Gastrocnemius medialis (tissue), 4 donors: ENCODE measurements at regions of chr2 and their contacts with region 1.

Region 1: GRCh38 chr2:161044095-161044865 is 115.9 kb upstream of the TANK start:
- DNase-seq: peak in 1 of 2 donors; percentile 53
- ATAC-seq: peak; percentile 66 to 73
- H3K4me3 ChIP-seq: no peak overlapping the region
- H3K27ac ChIP-seq: peak overlapping the region; percentile 15 to 66 (median 37)
- H3K4me1 ChIP-seq: peaks cover 14 to 23% of the 10 kb centered on the region in 2 donors
- H3K27me3 ChIP-seq: no peaks in the 10 kb centered on the region
- CTCF ChIP-seq: no peak
- POLR2A ChIP-seq: no peak

Region 2: GRCh38 chr2:161030260-161031063 is 13.8 kb before region 1 on chr2:
- in situ Hi-C with region 1: no loop called
- intact Hi-C with region 1: loop called (anchors 2 kb)
- DNase-seq: peak; percentile 80 to 84
- ATAC-seq: peak; percentile 99
- H3K4me3 ChIP-seq: no peak overlapping the region
- H3K27ac ChIP-seq: peak overlapping the region; percentile 70 to 78 (median 74)
- H3K4me1 ChIP-seq: peaks cover 6 to 15% of the 10 kb centered on the region in 2 donors
- H3K27me3 ChIP-seq: no peaks in the 10 kb centered on the region
- CTCF ChIP-seq: no peak
- POLR2A ChIP-seq: no peak